Natural killer cell (primary cell): ENCODE measurements at regions of chr3 and their contacts with region 1.

Region 1: DNA sequence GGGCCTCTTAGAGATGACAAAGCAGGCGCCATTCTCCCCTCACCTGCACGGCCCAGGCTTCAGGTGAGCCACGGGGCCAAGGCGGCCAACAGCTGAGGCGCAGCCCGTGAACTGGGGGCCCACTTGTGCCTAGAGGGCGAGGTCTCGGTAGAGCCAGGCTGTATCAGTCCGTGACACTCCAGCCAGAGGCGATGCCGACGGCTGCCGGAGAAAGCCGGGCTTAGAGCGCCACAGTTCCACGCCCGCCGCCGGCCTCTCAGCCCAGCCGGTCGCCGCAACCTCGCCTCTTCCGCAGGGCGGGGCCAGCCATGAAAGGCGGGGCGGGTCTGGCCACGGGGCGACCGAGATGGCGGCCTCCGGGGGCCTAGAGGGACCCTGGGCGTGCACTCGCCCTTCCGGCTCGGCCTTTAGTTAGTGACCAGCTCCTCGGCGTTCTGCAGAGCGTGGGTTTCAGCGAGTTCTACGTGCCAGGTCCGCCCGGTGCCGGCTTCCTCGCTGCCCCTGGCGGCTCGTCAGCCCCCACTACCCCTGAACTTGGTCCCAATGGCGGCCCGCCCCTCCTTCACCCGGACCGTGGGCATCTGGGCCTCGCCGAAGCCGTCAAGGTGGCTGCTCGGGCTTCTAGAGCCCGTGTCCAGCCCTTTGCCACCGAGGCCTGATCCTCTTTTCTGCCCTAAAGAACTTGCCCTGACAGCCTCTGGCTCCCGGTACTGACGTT is at the start of gene ZNF621:
- DNase-seq: peak; percentile 86
- ATAC-seq: peak; percentile 98 to 99 (median 98)
- H3K4me3 ChIP-seq: peak within 1 kb of the TSS; percentile 96
- H3K4me3 Mint-ChIP-seq: peak within 1 kb of the TSS; percentile 97
- H3K27ac ChIP-seq: peak within 1 kb of the TSS; percentile 93
- H3K27ac Mint-ChIP-seq: peak within 1 kb of the TSS; percentile 95 to 98
- H3K4me1 ChIP-seq: peaks cover 14% of the 10 kb centered on the region
- H3K4me1 Mint-ChIP-seq: peaks cover 24 to 43% of the 10 kb centered on the region in 2 donors
- H3K27me3 ChIP-seq: no peaks in the 10 kb centered on the region
- H3K27me3 Mint-ChIP-seq: no peaks in the 10 kb centered on the region
- CTCF ChIP-seq: no peak
- total RNA-seq, gene ZNF621: 27.7 to 33.5 (median 31.0) TPM

Region 2: DNA sequence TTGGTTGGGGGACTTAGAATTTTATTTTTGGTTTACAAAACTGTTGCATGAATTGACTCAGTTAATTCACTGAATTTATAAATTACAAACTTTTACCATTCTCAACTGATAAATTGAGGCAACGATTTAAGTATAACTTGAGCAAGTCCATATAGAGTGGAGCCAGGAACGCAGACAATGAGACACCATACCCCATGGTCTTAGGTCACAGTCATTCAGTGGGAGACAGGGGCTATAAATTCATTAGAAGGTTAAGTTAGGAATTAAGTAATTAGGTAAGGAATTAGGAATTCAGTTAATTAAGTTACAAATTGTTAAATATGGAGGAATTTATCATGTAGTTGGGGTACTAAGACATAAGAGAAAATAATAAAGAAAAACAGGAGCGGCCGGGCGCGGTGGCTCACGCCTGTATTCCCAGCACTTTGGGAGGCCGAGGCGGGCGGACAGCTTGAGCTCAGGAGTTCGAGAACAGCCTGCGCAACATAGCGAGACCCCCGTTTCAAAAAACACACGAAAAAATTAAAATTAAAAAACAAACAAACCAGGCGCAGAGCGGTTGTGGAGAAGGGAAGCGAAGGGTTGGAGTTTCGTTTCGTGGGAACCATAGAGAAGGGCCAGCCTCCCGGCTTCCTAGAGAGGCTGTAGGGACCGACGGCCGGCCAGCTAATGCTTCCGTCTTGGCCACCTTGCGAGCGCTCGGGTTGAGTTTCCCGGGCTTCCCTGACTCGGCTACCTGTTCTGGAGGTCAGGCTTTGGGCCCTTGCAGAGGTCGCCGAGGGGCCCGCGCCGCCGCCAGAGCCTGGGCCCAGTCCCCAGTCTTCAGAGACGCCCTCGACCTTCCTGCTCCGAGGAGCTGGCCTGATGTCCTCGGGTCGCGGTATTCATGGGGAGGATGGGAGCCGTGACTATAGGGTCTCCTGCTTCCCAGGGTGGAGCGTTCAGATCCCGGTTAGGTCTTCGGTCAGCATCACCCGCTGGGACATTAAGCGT is 48.0 kb before region 1 on chr3 and contains the start of gene ZNF619:
- intact Hi-C with region 1: loop called (anchors 1 kb)
- DNase-seq: peak; percentile 63 to 79
- ATAC-seq: peak; percentile 96 to 97 (median 97)
- H3K4me3 ChIP-seq: peak within 1 kb of the TSS; percentile 76
- H3K4me3 Mint-ChIP-seq: peak within 1 kb of the TSS; percentile 97
- H3K27ac ChIP-seq: peak within 1 kb of the TSS; percentile 84
- H3K27ac Mint-ChIP-seq: peak within 1 kb of the TSS; percentile 95 to 97
- H3K4me1 ChIP-seq: peaks cover 12% of the 10 kb centered on the region
- H3K4me1 Mint-ChIP-seq: peaks cover 21 to 30% of the 10 kb centered on the region in 2 donors
- H3K27me3 ChIP-seq: no peaks in the 10 kb centered on the region
- H3K27me3 Mint-ChIP-seq: no peaks in the 10 kb centered on the region
- CTCF ChIP-seq: no peak
- total RNA-seq, gene ZNF619: 9.5 to 14.3 (median 10.9) TPM